GM12878 (cell line): ENCODE measurements at regions of chr3 and their contacts with region 1.

Region 1: DNA sequence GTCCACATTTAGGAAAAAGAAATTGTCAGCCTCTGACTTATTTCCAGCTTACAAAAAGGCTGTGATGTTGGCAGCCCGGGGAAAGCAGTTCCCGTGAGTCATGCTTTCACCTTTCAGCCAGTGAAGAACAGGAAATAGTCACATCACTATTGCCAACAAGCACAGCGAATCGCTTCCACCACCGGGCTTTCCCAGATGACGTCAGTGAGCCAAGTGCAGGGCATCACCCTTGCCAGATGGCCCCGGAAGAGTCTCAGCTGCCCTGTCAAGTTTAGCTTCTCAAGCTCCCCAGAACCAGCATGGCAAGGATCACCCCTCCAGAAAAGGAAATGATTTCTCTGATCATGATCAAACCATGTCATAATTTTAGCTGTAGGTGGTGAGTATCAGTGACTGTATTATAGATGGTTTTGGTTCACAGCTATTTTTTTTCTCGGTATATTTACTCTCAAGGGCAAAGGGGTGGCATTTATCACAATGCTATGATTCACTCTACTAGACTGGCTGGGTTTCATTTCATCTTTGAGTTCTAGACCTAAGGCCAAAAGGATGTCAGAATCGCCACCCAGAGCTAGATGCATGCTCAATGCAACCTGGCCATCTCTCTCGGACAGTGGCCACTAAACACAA is 32.9 kb downstream of the B3GNT5 start:
- DNase-seq: peak; percentile 81
- ATAC-seq: peak; percentile 95
- H3K4me3 ChIP-seq: no peak overlapping the region
- H3K27ac ChIP-seq: peak overlapping the region; percentile 2; the same call in 1 of the 2 replicates
- H3K4me1 ChIP-seq: peaks cover 5% of the 10 kb centered on the region
- H3K27me3 ChIP-seq: no peaks in the 10 kb centered on the region
- CTCF ChIP-seq: no peak
- EP300 ChIP-seq: peak; percentile 66 to 76; a peak in 3 of 4 replicates
- POLR2A ChIP-seq: no peak
- RAD21 ChIP-seq: no peak

Region 2: DNA sequence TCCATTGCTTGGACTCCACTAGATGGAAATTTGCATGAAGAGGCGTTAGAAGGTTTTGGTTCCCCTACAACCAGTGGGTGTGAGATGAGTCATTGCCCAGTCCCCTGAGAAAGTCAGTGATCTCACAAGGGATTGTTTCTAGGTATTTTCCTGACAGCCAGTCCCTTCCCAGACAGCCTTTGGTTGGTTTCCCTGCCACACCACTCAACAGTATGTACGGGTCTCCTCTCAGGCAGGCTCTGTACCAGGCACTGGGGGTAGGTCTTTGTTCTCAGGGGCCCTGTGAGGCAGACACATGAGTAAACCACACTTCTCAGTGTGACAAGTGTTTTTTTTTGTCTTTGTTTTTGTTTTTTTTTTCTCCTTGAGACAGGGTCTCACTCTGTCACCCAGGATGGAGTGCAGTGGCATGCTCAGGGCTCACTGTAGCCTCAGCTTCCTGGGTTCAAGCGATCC is 127.4 kb before region 1 on chr3:
- CTCF ChIA-PET with region 1: interaction called, 3 read pairs
- POLR2A ChIA-PET with region 1: interaction called, 4 read pairs
- RAD21 ChIA-PET with region 1: interaction called, 14 read pairs
- SMC1A ChIA-PET with region 1: interaction called, 12 read pairs
- in situ Hi-C with region 1: no loop called
- intact Hi-C with region 1: no loop called
- DNase-seq: peak; percentile 97
- ATAC-seq: peak; percentile 71
- H3K4me3 ChIP-seq: peak overlapping the region; percentile 84
- H3K27ac ChIP-seq: peak overlapping the region; percentile 91
- H3K4me1 ChIP-seq: peaks cover 43% of the 10 kb centered on the region
- H3K27me3 ChIP-seq: no peaks in the 10 kb centered on the region
- CTCF ChIP-seq: no peak
- EP300 ChIP-seq: peak; percentile 90 to 91
- POLR2A ChIP-seq: no peak; the same call in 1 of the 2 replicates
- RAD21 ChIP-seq: no peak

Region 3: GRCh38 chr3:183224180-183224970 is 61.6 kb before region 1 on chr3:
- CTCF ChIA-PET with region 1: no interaction called
- POLR2A ChIA-PET with region 1: no interaction called
- RAD21 ChIA-PET with region 1: no interaction called
- SMC1A ChIA-PET with region 1: no interaction called
- in situ Hi-C with region 1: no loop called
- intact Hi-C with region 1: no loop called
- DNase-seq: no peak
- ATAC-seq: peak; percentile 30; the same call in 2 of the 3 replicates
- H3K4me3 ChIP-seq: no peak overlapping the region
- H3K27ac ChIP-seq: no peak overlapping the region
- H3K4me1 ChIP-seq: no peaks in the 10 kb centered on the region
- H3K27me3 ChIP-seq: 0 out of 4 replicates have a peak, but pooled peaks cover 0 to 3% of the 10 kb centered on the region in 2 experiments
- CTCF ChIP-seq: no peak
- EP300 ChIP-seq: no peak
- POLR2A ChIP-seq: no peak
- RAD21 ChIP-seq: no peak

Region 4: DNA sequence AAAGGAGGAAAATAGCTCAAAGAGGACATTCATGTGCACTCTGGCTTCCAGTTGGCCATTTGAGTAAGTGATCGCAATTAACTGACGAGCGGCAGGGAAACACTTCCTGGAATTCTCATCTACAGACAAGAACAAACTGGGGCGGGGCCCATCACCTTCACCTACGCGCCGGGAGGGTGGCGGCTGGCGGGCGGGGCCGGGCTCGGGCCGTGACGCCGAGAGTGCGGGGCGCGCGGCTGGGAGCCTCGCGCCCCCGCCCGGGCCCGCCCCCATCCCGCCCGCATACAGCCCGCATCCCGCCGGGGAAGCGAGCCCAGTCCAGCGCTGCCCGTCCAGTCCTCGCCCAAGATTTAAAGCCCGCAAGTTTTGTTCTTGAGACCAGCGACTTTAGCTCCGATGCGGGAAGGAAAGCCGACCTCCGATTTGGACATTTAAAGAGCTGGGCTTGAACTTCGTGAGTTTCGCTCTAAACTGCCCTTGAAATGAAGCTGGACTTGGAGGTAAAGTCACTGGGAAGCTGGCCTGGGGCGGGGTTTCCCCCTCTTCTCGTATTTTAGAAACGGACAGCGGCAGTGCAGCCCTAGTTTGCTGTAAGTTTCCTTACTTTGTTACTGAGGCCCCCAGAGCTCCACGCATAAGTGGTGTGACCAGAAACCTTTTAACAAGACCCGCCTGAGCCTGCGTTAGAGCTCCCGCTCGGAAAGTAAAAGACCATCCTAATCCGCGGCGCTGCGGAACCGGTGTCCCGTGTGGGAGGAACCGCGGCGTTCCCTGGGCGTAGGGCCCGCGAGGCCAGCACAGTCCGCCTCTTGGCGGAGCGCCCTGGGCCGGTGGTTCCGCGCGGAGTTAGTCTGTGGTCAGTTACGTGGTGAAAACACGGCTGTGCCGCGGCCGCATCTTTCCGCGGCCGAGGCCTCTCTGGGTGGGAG is 32.7 kb before region 1 on chr3 and contains the start of gene B3GNT5:
- CTCF ChIA-PET with region 1: no interaction called
- POLR2A ChIA-PET with region 1: no interaction called
- RAD21 ChIA-PET with region 1: interaction called, 5 read pairs
- SMC1A ChIA-PET with region 1: interaction called, 10 read pairs
- in situ Hi-C with region 1: no loop called
- intact Hi-C with region 1: no loop called
- DNase-seq: no peak
- ATAC-seq: peak; percentile 33
- H3K4me3 ChIP-seq: peak within 1 kb of the TSS; percentile 53
- H3K27ac ChIP-seq: no peak within 1 kb of the TSS
- H3K4me1 ChIP-seq: no peaks in the 10 kb centered on the region
- H3K27me3 ChIP-seq: peaks cover 9 to 21% of the 10 kb centered on the region in 2 experiments
- CTCF ChIP-seq: no peak
- EP300 ChIP-seq: no peak
- POLR2A ChIP-seq: no peak
- RAD21 ChIP-seq: no peak
- polyA plus RNA-seq, gene B3GNT5: 0.29 to 0.50 TPM

Region 5: GRCh38 chr3:183275418-183275817 is 10.5 kb before region 1 on chr3:
- CTCF ChIA-PET with region 1: interaction called, 13 read pairs
- POLR2A ChIA-PET with region 1: interaction called, 10 read pairs
- RAD21 ChIA-PET with region 1: interaction called, 10 read pairs
- SMC1A ChIA-PET with region 1: interaction called, 7 read pairs
- in situ Hi-C with region 1: no loop called
- intact Hi-C with region 1: no loop called
- DNase-seq: no peak
- ATAC-seq: no peak
- H3K4me3 ChIP-seq: no peak overlapping the region
- H3K27ac ChIP-seq: no peak overlapping the region
- H3K4me1 ChIP-seq: no peaks in the 10 kb centered on the region
- H3K27me3 ChIP-seq: no peaks in the 10 kb centered on the region
- CTCF ChIP-seq: no peak
- EP300 ChIP-seq: no peak
- POLR2A ChIP-seq: no peak
- RAD21 ChIP-seq: no peak

Region 6: GRCh38 chr3:183306798-183307671 is 21.1 kb after region 1 on chr3:
- CTCF ChIA-PET with region 1: interaction called, 5 read pairs
- POLR2A ChIA-PET with region 1: interaction called, 3 read pairs
- RAD21 ChIA-PET with region 1: interaction called, 12 read pairs
- SMC1A ChIA-PET with region 1: interaction called, 8 read pairs
- in situ Hi-C with region 1: no loop called
- intact Hi-C with region 1: no loop called
- DNase-seq: peak; percentile 21
- ATAC-seq: peak; percentile 94
- H3K4me3 ChIP-seq: no peak overlapping the region
- H3K27ac ChIP-seq: no peak overlapping the region
- H3K4me1 ChIP-seq: peaks cover 10% of the 10 kb centered on the region
- H3K27me3 ChIP-seq: no peaks in the 10 kb centered on the region
- CTCF ChIP-seq: no peak
- EP300 ChIP-seq: no peak
- POLR2A ChIP-seq: no peak
- RAD21 ChIP-seq: no peak

Region 7: DNA sequence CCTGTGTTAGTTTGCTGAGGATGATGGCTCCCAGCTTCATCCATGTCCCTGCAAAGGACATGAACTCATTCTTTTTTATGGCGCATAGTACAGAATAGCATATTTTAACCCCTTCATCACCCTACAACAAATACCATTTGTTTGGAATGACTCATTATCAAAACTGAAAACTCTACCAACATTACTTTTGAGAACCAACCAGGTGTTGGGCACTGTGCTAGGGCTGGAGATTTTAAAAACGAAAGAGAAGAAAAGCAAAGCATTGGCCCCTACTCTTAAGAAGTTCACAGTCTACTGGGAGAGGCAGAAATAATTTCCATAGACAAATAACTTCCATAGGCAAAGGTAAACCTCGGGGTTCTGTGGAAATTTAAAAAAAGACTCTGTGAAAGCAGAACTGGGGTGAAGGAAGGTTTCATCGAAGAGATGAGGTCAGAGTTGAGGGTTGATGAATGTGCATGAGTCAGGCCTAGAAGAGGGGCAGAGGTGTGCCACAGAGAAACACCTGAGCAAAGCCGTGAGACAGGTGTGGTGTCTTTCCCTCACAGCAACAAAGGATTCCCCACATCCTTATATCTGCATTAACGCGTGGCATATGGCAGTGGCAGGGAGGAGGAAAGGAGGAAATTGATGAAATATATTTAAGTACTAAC is 91.5 kb after region 1 on chr3:
- CTCF ChIA-PET with region 1: interaction called, 18 read pairs
- POLR2A ChIA-PET with region 1: interaction called, 3 read pairs
- RAD21 ChIA-PET with region 1: interaction called, 20 read pairs
- SMC1A ChIA-PET with region 1: interaction called, 19 read pairs
- in situ Hi-C with region 1: no loop called
- intact Hi-C with region 1: loop called (anchors 5 kb)
- DNase-seq: no peak
- ATAC-seq: peak; percentile 46
- H3K4me3 ChIP-seq: no peak overlapping the region
- H3K27ac ChIP-seq: no peak overlapping the region
- H3K4me1 ChIP-seq: peaks cover 11% of the 10 kb centered on the region; the same call in 1 of the 2 replicates
- H3K27me3 ChIP-seq: no peaks in the 10 kb centered on the region
- CTCF ChIP-seq: no peak
- EP300 ChIP-seq: no peak
- POLR2A ChIP-seq: no peak
- RAD21 ChIP-seq: no peak